Heart left ventricle (tissue), 16 donors: ENCODE measurements at regions of chr2 and their contacts with region 1.

Region 1: GRCh38 chr2:44498551-44498950 is 136.8 kb downstream of the CAMKMT start:
- DNase-seq: no peak
- ATAC-seq: no peak
- H3K4me3 ChIP-seq: no peak overlapping the region
- H3K27ac ChIP-seq: no peak overlapping the region
- H3K4me1 ChIP-seq: no peaks in the 10 kb centered on the region
- H3K27me3 ChIP-seq: no peaks in the 10 kb centered on the region
- CTCF ChIP-seq: no peak
- POLR2A ChIP-seq: no peak

Region 2: DNA sequence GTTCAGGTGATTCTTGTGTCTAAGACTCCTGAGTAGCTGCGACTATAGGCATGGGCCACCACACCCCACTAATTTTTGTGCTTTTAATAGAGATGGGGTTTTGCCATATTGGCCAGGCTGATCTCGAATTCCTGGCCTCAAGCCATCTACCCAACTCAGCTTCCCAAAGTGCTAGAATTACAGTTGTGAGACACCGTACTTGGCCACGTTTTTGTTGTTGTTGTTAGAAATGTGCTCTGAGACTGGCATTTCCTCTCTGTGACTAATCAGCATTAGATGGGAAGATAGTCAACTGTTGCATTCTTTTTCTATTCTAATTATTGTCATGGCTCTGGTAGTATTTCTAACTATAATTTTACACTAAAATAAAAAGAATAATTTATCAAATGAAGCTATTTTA is 54.9 kb after region 1 on chr2:
- intact Hi-C with region 1: loop called in 1 of 10 experiments (anchors 10 kb)
- DNase-seq: no peak
- ATAC-seq: no peak
- H3K4me3 ChIP-seq: no peak overlapping the region
- H3K27ac ChIP-seq: no peak overlapping the region
- H3K4me1 ChIP-seq: peaks cover 0 to 7% (median 0%) of the 10 kb centered on the region in 12 donors
- H3K27me3 ChIP-seq: no peaks in the 10 kb centered on the region
- CTCF ChIP-seq: no peak
- POLR2A ChIP-seq: no peak

Region 3: GRCh38 chr2:44649381-44649780 is 150.8 kb after region 1 on chr2:
- intact Hi-C with region 1: no loop called
- DNase-seq: no peak
- ATAC-seq: no peak
- H3K4me3 ChIP-seq: no peak overlapping the region
- H3K27ac ChIP-seq: no peak overlapping the region
- H3K4me1 ChIP-seq: no peaks in the 10 kb centered on the region
- H3K27me3 ChIP-seq: no peaks in the 10 kb centered on the region
- CTCF ChIP-seq: no peak
- POLR2A ChIP-seq: no peak